CD4-positive, alpha-beta T cell (primary cell): ENCODE measurements at regions of chr4 and their contacts with region 1.

Region 1: GRCh38 chr4:79421483-79421882 is 13.5 kb upstream of the GK2 start:
- DNase-seq: no peak
- ATAC-seq: no peak
- H3K4me3 ChIP-seq: no peak overlapping the region
- H3K4me3 Mint-ChIP-seq: no peak overlapping the region
- H3K27ac ChIP-seq: no peak overlapping the region
- H3K27ac Mint-ChIP-seq: no peak overlapping the region
- H3K4me1 ChIP-seq: no peaks in the 10 kb centered on the region
- H3K4me1 Mint-ChIP-seq: no peaks in the 10 kb centered on the region
- H3K27me3 ChIP-seq: no peaks in the 10 kb centered on the region
- H3K27me3 Mint-ChIP-seq: peaks cover 4% of the 10 kb centered on the region
- CTCF ChIP-seq: no peak

Region 2: GRCh38 chr4:77443941-77444340 is 1977.5 kb before region 1 on chr4:
- CTCF ChIA-PET with region 1: no interaction called
- POLR2A ChIA-PET with region 1: no interaction called
- intact Hi-C with region 1: no loop called
- DNase-seq: no peak
- ATAC-seq: no peak
- H3K4me3 ChIP-seq: no peak overlapping the region
- H3K4me3 Mint-ChIP-seq: no peak overlapping the region
- H3K27ac ChIP-seq: no peak overlapping the region
- H3K27ac Mint-ChIP-seq: no peak overlapping the region
- H3K4me1 ChIP-seq: no peaks in the 10 kb centered on the region
- H3K4me1 Mint-ChIP-seq: no peaks in the 10 kb centered on the region
- H3K27me3 ChIP-seq: no peaks in the 10 kb centered on the region
- H3K27me3 Mint-ChIP-seq: peaks cover 11% of the 10 kb centered on the region
- CTCF ChIP-seq: no peak

Region 3: GRCh38 chr4:78477276-78477675 is 944.2 kb before region 1 on chr4:
- CTCF ChIA-PET with region 1: no interaction called
- POLR2A ChIA-PET with region 1: no interaction called
- intact Hi-C with region 1: loop called in 1 of 2 experiments (anchors 10 kb)
- DNase-seq: no peak
- ATAC-seq: no peak
- H3K4me3 ChIP-seq: no peak overlapping the region
- H3K4me3 Mint-ChIP-seq: no peak overlapping the region
- H3K27ac ChIP-seq: no peak overlapping the region
- H3K27ac Mint-ChIP-seq: no peak overlapping the region
- H3K4me1 ChIP-seq: no peaks in the 10 kb centered on the region
- H3K4me1 Mint-ChIP-seq: no peaks in the 10 kb centered on the region
- H3K27me3 ChIP-seq: no peaks in the 10 kb centered on the region
- H3K27me3 Mint-ChIP-seq: peaks cover 3% of the 10 kb centered on the region
- CTCF ChIP-seq: no peak

Region 4: GRCh38 chr4:79257953-79258613 is 163.4 kb before region 1 on chr4:
- CTCF ChIA-PET with region 1: no interaction called
- POLR2A ChIA-PET with region 1: no interaction called
- intact Hi-C with region 1: no loop called
- DNase-seq: no peak
- ATAC-seq: no peak
- H3K4me3 ChIP-seq: no peak overlapping the region
- H3K4me3 Mint-ChIP-seq: no peak overlapping the region
- H3K27ac ChIP-seq: no peak overlapping the region
- H3K27ac Mint-ChIP-seq: no peak overlapping the region
- H3K4me1 ChIP-seq: no peaks in the 10 kb centered on the region
- H3K4me1 Mint-ChIP-seq: no peaks in the 10 kb centered on the region
- H3K27me3 ChIP-seq: no peaks in the 10 kb centered on the region
- H3K27me3 Mint-ChIP-seq: no peaks in the 10 kb centered on the region
- CTCF ChIP-seq: no peak

Region 5: DNA sequence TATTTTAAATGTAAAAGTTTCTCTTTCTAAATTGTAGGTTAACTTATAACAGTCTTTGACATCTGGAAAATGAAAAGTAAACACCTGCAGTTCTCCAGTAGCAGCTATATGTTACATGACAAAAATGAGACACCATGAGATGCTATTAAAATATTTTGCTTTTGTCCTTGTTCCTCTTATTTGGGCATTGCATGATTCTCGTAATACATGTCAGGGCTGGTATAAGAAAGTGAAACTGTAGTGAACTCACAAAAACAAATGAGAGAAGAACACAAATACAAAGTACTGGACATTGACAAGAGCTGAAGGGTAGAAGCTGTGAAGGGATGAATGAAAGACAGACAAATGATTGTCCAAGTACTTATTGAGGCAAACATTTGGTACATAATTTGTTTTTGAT is 22.4 kb before region 1 on chr4:
- CTCF ChIA-PET with region 1: no interaction called
- POLR2A ChIA-PET with region 1: no interaction called
- intact Hi-C with region 1: no loop called
- DNase-seq: no peak
- ATAC-seq: no peak
- H3K4me3 ChIP-seq: no peak overlapping the region
- H3K4me3 Mint-ChIP-seq: no peak overlapping the region
- H3K27ac ChIP-seq: no peak overlapping the region
- H3K27ac Mint-ChIP-seq: no peak overlapping the region
- H3K4me1 ChIP-seq: no peaks in the 10 kb centered on the region
- H3K4me1 Mint-ChIP-seq: no peaks in the 10 kb centered on the region
- H3K27me3 ChIP-seq: no peaks in the 10 kb centered on the region
- H3K27me3 Mint-ChIP-seq: no peaks in the 10 kb centered on the region
- CTCF ChIP-seq: no peak

Region 6: GRCh38 chr4:79687006-79687405 is 265.5 kb after region 1 on chr4:
- CTCF ChIA-PET with region 1: no interaction called
- POLR2A ChIA-PET with region 1: no interaction called
- intact Hi-C with region 1: no loop called
- DNase-seq: no peak
- ATAC-seq: no peak
- H3K4me3 ChIP-seq: no peak overlapping the region
- H3K4me3 Mint-ChIP-seq: no peak overlapping the region
- H3K27ac ChIP-seq: no peak overlapping the region
- H3K27ac Mint-ChIP-seq: no peak overlapping the region
- H3K4me1 ChIP-seq: no peaks in the 10 kb centered on the region
- H3K4me1 Mint-ChIP-seq: peaks cover 6% of the 10 kb centered on the region
- H3K27me3 ChIP-seq: no peaks in the 10 kb centered on the region
- H3K27me3 Mint-ChIP-seq: no peaks in the 10 kb centered on the region
- CTCF ChIP-seq: no peak